ENCODE measurements at regions of chr19 and their contacts with region 1.

Region 1: GRCh38 chr19:54189735-54190502 is 539 bp upstream of the MBOAT7 start:
- DNase-seq: peak; percentile 100
- H3K4me3 Mint-ChIP-seq: peak overlapping the region; percentile 82
- H3K27ac Mint-ChIP-seq: peak overlapping the region; percentile 96
- H3K4me1 Mint-ChIP-seq: peaks cover 31% of the 10 kb centered on the region
- H3K27me3 Mint-ChIP-seq: no peaks in the 10 kb centered on the region

Region 2: GRCh38 chr19:54002495-54003315 is 187.2 kb before region 1 on chr19:
- CTCF ChIA-PET with region 1: no interaction called
- intact Hi-C with region 1: no loop called
- DNase-seq: no peak
- H3K4me3 Mint-ChIP-seq: no peak overlapping the region
- H3K27ac Mint-ChIP-seq: no peak overlapping the region
- H3K4me1 Mint-ChIP-seq: no peaks in the 10 kb centered on the region
- H3K27me3 Mint-ChIP-seq: peaks cover 30% of the 10 kb centered on the region

Region 3: DNA sequence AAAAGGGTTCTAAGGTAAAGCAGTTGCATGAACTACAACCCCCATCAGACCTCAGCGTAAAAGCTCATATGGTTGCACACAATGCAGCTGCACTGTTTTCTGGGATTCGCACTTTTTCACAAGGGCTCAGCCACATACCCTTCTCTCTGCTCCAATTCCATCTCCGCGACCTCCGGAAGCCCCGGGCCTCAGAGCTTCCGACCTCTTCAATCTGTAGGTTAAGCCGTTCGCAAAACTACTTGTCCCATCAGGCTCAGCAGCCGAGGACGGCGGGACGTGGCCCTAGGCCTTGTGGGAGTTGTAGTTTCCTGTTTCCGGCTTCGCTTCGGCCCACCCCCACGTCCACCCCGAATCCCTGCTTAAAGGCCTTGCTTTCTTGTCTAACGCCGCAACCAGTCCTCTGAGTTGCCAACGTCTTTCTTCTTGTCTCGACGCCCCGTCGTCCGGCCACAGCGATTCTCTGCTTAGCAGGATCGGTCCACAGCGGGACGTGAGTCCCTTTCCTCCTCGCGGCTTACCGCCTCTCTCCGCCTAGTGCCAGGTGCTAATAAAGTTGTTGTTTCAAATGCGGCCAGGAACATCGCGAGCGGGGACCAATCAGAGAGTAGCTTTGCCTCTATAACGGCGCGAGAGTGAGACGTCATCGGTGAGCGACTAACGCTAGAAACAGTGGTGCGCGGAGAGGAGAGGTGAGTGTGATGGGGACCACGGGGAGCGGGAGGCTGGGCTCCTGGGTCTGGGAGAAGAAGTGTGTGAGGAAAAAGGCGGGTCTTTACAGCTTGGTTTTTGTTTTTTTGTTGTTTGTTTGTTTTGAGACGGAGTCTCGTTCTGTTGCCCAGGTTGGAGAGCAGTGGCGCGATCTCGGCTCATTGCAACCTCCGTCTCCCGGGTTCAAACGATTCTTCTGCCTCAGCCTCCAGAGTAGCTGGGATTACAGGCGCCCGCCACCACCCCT is 74.5 kb before region 1 on chr19 and contains the starts of genes PRPF31 and TFPT:
- CTCF ChIA-PET with region 1: no interaction called
- intact Hi-C with region 1: loop called (anchors 1 kb)
- DNase-seq: peak; percentile 99
- H3K4me3 Mint-ChIP-seq: peak within 1 kb of the TSS; percentile 90
- H3K27ac Mint-ChIP-seq: peak within 1 kb of the TSS; percentile 97
- H3K4me1 Mint-ChIP-seq: peaks cover 30% of the 10 kb centered on the region
- H3K27me3 Mint-ChIP-seq: no peaks in the 10 kb centered on the region
- total RNA-seq, gene PRPF31: 67.5 to 71.8 TPM
- total RNA-seq, gene TFPT: 17.0 to 17.3 TPM

Region 4: DNA sequence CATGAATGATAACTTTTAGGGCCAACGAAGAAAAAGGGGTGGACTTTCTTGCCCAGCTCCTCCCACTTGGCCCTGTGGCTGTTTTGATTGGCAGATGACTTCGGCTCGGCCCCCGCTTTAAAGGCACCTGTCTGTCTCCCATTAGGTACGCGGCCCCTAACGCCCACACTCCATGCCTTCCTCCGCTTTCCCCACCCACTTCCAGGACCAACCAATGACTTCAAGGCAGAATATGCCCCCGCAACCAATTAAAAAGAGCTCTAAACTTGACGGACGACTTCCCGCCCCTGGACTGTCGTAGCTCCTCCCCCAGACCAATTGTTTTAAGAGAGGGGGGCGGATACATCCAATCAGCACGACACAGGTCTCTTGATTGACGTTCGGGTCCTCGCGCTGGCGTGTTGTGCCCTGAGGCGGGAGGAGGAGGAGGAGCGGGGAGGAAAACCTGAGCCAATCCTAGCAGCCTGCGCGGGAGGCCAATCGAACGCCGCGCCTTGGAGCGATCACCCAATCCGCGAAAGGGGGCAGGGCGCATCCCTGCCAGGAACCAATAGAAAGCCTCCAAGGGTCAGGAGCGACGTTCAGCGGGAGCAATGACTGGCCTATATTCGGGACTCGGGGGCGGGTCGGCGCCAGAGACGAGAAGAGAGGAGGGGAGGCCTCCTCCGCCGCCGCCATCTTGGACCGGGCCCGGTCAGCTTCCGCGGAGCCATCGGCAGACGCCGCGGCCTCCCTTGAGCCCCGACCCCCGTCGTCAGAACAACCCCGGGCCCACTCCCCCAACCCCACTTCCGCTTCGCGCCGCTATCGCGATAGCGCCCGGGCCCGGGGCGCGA is 52.6 kb before region 1 on chr19 and contains the start of gene CNOT3:
- CTCF ChIA-PET with region 1: interaction called, 3 read pairs
- intact Hi-C with region 1: loop called (anchors 1 kb)
- DNase-seq: peak; percentile 100
- H3K4me3 Mint-ChIP-seq: peak within 1 kb of the TSS; percentile 83
- H3K27ac Mint-ChIP-seq: peak within 1 kb of the TSS; percentile 89
- H3K4me1 Mint-ChIP-seq: peaks cover 39% of the 10 kb centered on the region
- H3K27me3 Mint-ChIP-seq: no peaks in the 10 kb centered on the region
- total RNA-seq, gene CNOT3: 50.4 to 58.3 TPM

Region 5: DNA sequence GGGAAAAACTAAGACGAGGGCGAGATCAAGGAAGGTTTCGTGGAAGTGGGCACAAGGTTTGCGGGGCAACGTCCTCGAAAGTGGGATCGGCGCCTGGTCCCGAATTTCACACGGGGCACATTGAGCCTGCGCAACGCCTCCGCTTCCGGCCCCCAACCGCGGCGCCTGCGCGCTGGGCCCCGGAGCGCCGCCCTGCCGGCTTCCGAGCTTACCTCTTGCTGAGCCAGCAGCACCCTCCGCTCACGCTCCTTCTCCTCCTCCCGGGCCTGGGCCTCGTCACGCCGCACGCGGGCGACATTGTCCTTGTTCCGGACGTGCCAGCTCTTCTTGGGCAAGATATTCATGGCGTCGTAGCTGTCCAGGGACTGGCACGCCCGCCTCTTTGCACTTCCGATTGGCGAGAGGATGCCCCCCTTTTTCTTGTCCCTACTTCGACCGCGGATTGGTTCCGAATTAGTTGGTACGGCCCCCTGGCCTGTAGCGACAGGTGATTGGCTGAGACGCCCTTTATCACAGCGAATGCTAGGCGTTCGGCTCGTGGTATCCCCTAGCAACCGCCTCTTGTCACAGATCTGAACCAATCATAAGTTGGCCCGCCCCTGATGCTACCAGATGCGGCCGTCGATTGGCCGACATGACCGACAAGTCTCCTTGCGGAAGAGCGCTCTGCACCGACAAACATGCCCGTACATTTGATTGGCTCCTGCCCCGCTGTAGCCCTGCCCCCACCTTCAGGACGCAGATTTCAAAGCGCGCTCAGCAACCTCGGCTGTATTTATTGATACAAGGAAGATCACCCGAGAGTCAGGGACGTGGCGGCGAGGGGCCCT is 30.4 kb before region 1 on chr19 and contains the start of gene LENG1:
- CTCF ChIA-PET with region 1: interaction called, 7 read pairs
- intact Hi-C with region 1: loop called (anchors 1 kb)
- DNase-seq: peak; percentile 100
- H3K4me3 Mint-ChIP-seq: peak within 1 kb of the TSS; percentile 100
- H3K27ac Mint-ChIP-seq: peak within 1 kb of the TSS; percentile 99
- H3K4me1 Mint-ChIP-seq: peaks cover 58% of the 10 kb centered on the region
- H3K27me3 Mint-ChIP-seq: peaks cover 7% of the 10 kb centered on the region
- total RNA-seq, gene LENG1: 4.7 to 5.6 TPM

Region 6: DNA sequence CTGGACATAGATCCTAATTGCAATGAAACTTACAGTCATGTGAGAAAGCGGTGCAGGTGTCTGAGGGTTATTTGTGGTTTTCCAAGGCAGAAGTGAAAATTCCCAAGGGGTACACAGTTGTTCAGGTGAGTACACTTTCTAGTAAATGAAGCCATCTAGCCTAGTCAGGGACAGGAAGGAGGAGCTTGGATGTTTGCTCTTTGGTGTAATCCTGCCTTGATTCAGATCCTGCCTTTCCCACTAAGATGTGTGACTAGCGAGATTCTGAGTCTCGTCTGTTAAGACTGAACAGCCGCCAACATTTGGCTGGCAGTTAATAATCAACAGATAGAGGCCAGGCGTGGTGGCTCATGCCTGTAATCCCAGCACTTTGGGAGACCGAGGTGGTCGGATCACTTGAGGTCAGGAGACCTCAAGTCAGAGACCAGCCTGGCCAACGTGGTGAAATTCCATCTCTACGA is 13.3 kb after region 1 on chr19:
- CTCF ChIA-PET with region 1: interaction called, 3 read pairs
- intact Hi-C with region 1: loop called (anchors 1 kb)
- DNase-seq: no peak
- H3K4me3 Mint-ChIP-seq: peak overlapping the region; percentile 99
- H3K27ac Mint-ChIP-seq: peak overlapping the region; percentile 53
- H3K4me1 Mint-ChIP-seq: peaks cover 74% of the 10 kb centered on the region
- H3K27me3 Mint-ChIP-seq: no peaks in the 10 kb centered on the region

Region 7: DNA sequence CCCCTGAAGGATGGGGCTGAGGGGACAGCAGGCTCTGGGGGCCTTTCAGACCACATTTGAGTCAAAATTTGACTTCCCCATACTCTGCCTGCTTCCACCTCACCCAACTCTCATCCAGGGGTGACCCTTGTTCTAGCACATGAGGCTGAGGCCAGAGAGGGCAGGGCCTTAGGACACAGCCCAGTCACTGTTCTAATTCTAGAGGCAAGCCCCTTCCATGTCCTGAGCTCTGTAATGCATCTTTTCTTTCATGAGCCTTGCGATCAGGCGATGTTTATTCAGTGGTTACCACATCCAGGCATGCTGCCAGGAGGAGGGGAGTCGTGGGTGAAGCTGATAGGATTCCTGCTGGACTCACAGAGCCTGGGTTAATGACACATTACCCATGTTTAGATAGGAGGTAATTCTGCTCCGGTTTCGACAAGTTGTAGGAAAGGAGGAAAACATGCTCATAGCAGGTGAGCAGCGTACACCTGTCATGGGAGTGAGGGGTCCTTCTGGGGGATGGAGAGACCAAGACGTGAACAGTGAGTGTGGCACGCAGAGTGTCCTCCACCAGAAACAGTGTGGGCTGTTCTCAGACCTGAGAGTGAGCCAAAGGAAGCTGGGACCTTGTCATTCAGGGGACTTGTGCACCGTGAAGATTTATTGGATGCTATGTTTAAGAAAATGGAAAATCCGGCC is 20.0 kb after region 1 on chr19:
- CTCF ChIA-PET with region 1: interaction called, 3 read pairs
- intact Hi-C with region 1: loop called (anchors 2 kb)
- DNase-seq: no peak
- H3K4me3 Mint-ChIP-seq: no peak overlapping the region
- H3K27ac Mint-ChIP-seq: peak overlapping the region; percentile 73
- H3K4me1 Mint-ChIP-seq: peaks cover 65% of the 10 kb centered on the region
- H3K27me3 Mint-ChIP-seq: no peaks in the 10 kb centered on the region

Region 8: DNA sequence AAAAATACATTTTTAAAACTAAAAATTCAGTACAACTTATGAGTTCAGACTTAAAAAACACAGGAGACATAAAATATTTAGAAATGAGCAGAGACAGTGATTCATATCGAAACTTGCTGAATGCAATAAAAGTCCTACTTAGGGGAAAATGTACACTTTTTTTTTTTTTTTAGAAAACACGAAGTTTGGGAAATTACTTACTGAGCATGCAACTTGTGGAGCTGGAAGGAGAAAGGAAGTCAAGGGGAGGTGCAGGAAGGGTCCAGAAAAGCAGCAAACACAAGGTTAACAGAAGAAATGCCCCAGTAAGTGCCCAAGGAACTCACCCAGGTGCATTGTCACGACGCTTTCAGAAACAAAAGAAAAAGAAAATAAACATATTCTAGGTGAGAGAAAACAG is 193.4 kb after region 1 on chr19:
- CTCF ChIA-PET with region 1: no interaction called
- intact Hi-C with region 1: no loop called
- DNase-seq: no peak
- H3K4me3 Mint-ChIP-seq: no peak overlapping the region
- H3K27ac Mint-ChIP-seq: no peak overlapping the region
- H3K4me1 Mint-ChIP-seq: peaks cover 20% of the 10 kb centered on the region
- H3K27me3 Mint-ChIP-seq: no peaks in the 10 kb centered on the region